Activated B cell treated with CpG ODN at 0.5 μM for 24 hours (primary cell): ENCODE measurements at regions of chr15 and their contacts with region 1.

Region 1: GRCh38 chr15:89442671-89443307 is 53.6 kb downstream of the RHCG start:
- DNase-seq: peak; percentile 29
- ATAC-seq: no peak
- H3K4me3 Mint-ChIP-seq: no peak overlapping the region
- H3K27ac Mint-ChIP-seq: no peak overlapping the region
- H3K4me1 Mint-ChIP-seq: peaks cover 31% of the 10 kb centered on the region
- H3K27me3 Mint-ChIP-seq: peaks cover 9% of the 10 kb centered on the region
- CTCF ChIP-seq: no peak

Region 2: GRCh38 chr15:89416141-89416853 is 26.5 kb before region 1 on chr15:
- CTCF ChIA-PET with region 1: interaction called, 9 read pairs
- POLR2A ChIA-PET with region 1: no interaction called
- intact Hi-C with region 1: loop called (anchors 2 kb)
- DNase-seq: peak; percentile 63
- ATAC-seq: peak; percentile 92
- H3K4me3 Mint-ChIP-seq: no peak overlapping the region
- H3K27ac Mint-ChIP-seq: no peak overlapping the region
- H3K4me1 Mint-ChIP-seq: peaks cover 13% of the 10 kb centered on the region
- H3K27me3 Mint-ChIP-seq: peaks cover 76% of the 10 kb centered on the region
- CTCF ChIP-seq: peak; percentile 84

Region 3: DNA sequence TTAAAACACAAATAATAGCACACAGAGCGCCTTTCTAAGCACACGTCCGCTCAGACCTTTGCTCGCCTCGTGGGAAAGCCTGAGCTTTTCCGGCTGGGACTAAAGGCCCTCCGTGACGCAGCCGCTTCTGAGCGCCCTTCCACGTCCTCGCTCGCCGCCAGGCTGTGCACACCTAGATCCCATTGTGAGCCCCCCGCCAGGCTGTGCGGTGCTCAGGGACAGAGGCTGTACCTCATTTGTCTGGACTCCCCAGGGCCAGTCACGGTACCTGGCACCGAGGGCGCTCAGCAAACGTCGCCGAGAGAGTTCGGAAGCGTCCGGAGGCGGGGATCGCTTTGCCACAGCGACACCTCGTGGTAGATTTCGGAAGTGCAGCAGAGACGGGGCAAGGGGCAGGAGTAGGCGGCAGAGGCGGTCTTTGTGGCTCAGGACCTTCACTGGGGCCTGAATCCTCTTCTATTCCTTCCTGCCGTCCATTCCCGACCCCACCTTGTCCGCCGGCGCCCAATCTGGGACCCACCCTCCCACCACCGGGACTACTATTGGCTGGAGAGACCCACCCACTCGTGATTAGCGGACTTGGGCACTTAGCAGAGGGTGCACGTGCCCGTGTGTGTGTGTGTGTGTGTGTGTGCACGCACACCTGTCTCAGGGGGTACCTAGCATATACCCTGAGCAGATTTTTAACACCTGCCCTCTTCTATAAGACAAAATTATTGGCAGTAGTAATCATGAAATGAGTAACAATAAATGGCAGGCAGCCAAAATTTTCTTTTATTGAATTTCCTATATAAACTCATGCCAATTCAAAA is 12.1 kb before region 1 on chr15:
- CTCF ChIA-PET with region 1: interaction called, 4 read pairs
- POLR2A ChIA-PET with region 1: no interaction called
- intact Hi-C with region 1: loop called (anchors 1 kb)
- DNase-seq: peak; percentile 94
- ATAC-seq: peak; percentile 99
- H3K4me3 Mint-ChIP-seq: peak overlapping the region; percentile 85
- H3K27ac Mint-ChIP-seq: peak overlapping the region; percentile 38
- H3K4me1 Mint-ChIP-seq: peaks cover 4% of the 10 kb centered on the region
- H3K27me3 Mint-ChIP-seq: peaks cover 10% of the 10 kb centered on the region
- CTCF ChIP-seq: peak; percentile 81

Region 4: GRCh38 chr15:89472785-89473256 is 30.0 kb after region 1 on chr15:
- CTCF ChIA-PET with region 1: interaction called, 3 read pairs
- POLR2A ChIA-PET with region 1: no interaction called
- intact Hi-C with region 1: loop called (anchors 1 kb)
- DNase-seq: peak; percentile 62
- ATAC-seq: peak; percentile 86
- H3K4me3 Mint-ChIP-seq: no peak overlapping the region
- H3K27ac Mint-ChIP-seq: no peak overlapping the region
- H3K4me1 Mint-ChIP-seq: no peaks in the 10 kb centered on the region
- H3K27me3 Mint-ChIP-seq: peaks cover 30% of the 10 kb centered on the region
- CTCF ChIP-seq: no peak

Region 5: DNA sequence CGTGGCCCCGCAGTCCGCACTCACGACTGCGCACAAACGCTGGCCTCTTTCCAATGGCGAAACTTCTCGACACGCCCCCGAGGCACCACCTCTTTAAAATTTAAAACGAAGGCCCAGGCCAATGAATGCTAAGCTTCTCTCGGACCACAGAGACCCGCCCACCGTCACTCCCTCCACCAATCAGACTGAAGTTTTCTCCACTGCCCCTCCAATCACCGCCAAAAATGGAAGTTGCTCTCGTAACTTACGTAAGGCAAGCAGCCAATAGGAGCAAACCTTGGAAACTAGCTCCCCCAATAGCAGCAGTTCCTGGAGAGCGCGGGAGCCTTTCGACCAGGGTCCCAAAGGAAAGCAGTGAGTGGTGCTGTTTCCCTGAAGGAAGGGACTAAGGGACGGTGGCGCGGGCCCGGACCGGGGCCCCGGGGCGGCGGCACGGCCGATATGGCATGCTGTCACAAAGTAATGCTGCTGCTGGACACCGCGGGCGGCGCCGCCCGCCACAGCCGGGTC is 132.4 kb after region 1 on chr15 and contains the start of gene TICRR:
- CTCF ChIA-PET with region 1: no interaction called
- POLR2A ChIA-PET with region 1: no interaction called
- intact Hi-C with region 1: loop called (anchors 1 kb)
- DNase-seq: peak; percentile 80
- ATAC-seq: peak; percentile 97
- H3K4me3 Mint-ChIP-seq: peak within 1 kb of the TSS; percentile 82
- H3K27ac Mint-ChIP-seq: peak within 1 kb of the TSS; percentile 31
- H3K4me1 Mint-ChIP-seq: peaks cover 11% of the 10 kb centered on the region
- H3K27me3 Mint-ChIP-seq: peaks cover 10% of the 10 kb centered on the region
- CTCF ChIP-seq: no peak
- total RNA-seq, gene TICRR: 0.69 TPM in 2 replicates